ENCODE measurements at regions of chr9 and their contacts with region 1.

Region 1: DNA sequence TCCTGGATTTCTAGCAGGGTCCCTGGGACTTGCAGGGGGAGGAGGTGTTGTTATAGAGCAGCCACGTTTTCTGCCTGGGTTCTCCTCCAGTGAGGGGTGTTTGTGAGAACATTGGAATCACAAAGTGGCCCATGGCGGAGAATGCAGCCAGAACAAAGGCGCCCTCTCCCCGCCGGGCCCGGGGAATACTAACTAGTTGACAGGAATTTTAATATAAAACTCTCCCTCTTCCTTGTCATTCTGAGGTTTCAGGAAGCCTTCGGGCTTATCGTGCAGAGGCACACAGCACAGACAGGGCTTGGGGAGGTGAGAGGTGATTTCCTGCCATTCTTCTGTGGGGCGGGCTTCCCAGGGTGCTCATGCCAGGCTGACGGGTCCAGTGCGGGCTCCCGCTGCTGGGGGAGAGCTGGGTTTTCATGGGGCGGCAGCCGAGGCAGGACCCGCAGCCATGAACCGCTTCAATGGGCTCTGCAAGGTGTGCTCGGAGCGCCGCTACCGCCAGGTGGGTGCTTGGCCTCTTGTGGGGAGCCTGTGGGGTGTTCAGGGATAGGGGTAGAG is 37.7 kb downstream of the RGS3 start:
- DNase-seq: peak in 4 of 5 donors; percentile 59 to 72 (median 68)
- ATAC-seq: peak in 3 of 4 donors; percentile 66 to 77 (median 72)
- H3K4me3 ChIP-seq: peak overlapping the region; percentile 23 to 71 (median 62)
- H3K27ac ChIP-seq: peak overlapping the region; percentile 67 to 91 (median 87)
- H3K4me1 ChIP-seq: peaks cover 0 to 64% (median 30%) of the 10 kb centered on the region in 12 donors
- H3K27me3 ChIP-seq: no peaks in the 10 kb centered on the region
- CTCF ChIP-seq: peak in 2 of 12 donors; percentile 25 to 27
- POLR2A ChIP-seq: peak in 1 of 2 donors; percentile 40

Region 2: DNA sequence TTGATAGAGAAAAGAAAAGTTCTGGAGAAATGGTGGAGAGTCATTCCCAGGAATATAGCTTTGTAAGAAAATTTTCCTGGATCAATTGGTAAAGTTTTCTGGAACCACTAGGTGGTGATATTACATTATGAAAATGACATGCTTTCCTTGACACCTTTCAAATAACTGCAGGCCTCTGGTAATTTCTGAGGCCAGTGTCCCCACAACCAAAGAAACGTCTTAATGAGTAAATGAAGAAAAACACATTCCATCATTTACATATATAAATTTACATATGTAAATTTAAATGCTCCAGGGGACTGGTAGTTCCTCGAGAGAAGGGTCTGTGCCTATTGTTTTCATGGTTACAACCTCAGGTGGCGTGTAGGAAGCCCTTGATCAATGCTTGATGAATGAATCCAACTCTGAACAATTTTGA is 54.9 kb before region 1 on chr9:
- intact Hi-C with region 1: loop called in 4 of 10 experiments (anchors 2 to 10 kb)
- DNase-seq: no peak
- ATAC-seq: peak in 3 of 4 donors; percentile 42 to 70 (median 59)
- H3K4me3 ChIP-seq: no peak overlapping the region
- H3K27ac ChIP-seq: peak overlapping the region in 9 of 12 donors; percentile 6 to 67 (median 35)
- H3K4me1 ChIP-seq: peaks cover 0 to 19% (median 5%) of the 10 kb centered on the region in 12 donors
- H3K27me3 ChIP-seq: no peaks in the 10 kb centered on the region
- CTCF ChIP-seq: peak; percentile 53 to 82 (median 70)
- POLR2A ChIP-seq: no peak

Region 3: DNA sequence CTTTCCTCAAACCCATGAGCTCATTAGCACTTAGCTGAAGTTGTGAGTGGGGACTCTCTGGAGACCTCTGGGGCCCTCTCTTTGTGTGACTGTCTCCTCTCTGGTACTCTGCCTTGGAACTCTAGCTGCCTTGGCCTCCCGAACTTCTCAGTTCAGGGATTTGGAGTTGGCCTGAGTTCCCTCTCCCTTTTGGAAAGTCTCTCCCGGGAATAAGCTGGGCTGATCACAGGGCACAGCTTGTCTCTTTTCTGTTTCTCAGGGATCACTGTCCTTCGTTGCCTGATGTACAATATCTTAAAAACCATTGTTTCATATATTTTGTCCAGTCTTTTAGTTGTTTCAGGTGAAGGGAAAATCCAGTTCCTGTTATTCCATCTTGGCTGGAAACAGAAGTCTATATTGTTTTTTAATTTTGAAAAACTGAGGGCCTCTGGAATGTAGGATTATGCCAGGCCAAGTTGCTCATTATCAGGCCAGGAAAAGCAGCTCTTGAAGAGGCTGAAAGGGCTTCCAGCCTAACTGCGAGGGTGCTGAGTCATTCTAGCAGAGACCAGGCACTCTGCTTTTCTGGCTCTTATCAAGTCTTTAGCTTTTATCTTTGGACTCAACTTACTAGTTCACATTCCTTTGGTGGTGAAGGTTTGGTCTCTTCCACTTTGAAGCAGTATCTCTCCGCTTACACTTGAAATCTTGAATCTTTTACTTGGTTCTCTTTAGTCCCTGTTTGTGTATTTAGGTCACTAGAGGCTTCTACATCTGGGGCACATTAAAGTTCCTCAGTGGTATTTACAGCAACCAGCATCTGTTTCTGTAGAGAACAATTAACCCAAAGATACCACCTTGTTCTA is 46.1 kb before region 1 on chr9:
- intact Hi-C with region 1: loop called in 4 of 10 experiments (anchors 2 to 10 kb)
- DNase-seq: peak in 4 of 5 donors; percentile 58 to 80 (median 68)
- ATAC-seq: peak; percentile 85 to 96 (median 94)
- H3K4me3 ChIP-seq: no peak overlapping the region
- H3K27ac ChIP-seq: peak overlapping the region; percentile 84 to 97 (median 90)
- H3K4me1 ChIP-seq: peaks cover 4 to 39% (median 28%) of the 10 kb centered on the region in 12 donors
- H3K27me3 ChIP-seq: no peaks in the 10 kb centered on the region
- CTCF ChIP-seq: peak in 1 of 12 donors; percentile 8
- POLR2A ChIP-seq: no peak

Region 4: DNA sequence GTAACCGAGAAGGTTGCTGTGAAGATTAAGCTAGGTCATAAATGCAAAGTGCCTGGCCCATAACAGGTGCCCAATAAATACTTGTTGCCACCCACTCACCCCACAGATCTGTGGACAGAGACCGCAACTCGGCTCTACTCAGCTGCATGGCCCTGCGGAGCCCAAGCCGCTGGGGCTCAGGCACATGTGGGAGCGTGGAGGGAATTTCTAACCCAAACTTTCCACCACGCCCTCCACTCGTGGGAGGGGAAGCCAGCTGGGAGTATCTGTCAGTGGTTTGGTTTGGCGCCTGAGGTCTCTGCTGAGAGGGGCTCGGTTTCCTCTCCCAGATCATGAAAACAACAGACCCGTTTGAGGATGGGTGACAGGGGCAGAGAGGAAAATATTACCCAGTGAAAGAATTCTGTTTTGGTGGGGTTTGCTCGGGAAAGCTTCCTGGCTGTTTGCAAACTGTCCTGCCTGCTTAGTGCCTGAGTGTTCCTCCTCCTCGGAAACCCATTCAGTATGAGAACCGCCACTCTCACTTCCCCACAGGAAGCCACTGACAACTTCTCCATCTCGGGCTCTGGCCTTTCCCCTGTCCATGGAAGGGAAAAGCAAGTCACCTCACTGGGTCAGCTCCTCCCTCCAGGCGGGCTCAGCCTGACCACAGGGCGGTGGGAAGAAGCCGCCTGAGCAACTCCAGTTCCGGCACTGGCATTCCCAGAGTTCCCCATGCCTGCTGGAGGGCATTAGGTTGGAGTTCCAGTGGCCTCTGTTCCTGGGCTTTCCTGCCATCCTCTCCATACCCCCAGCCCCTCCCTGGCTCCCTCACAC is 22.4 kb after region 1 on chr9:
- intact Hi-C with region 1: no loop called
- DNase-seq: peak; percentile 69 to 81 (median 77)
- ATAC-seq: peak; percentile 17 to 69 (median 62)
- H3K4me3 ChIP-seq: peak overlapping the region in 3 of 12 donors; percentile 4 to 39 (median 17)
- H3K27ac ChIP-seq: peak overlapping the region; percentile 49 to 86 (median 80)
- H3K4me1 ChIP-seq: peaks cover 23 to 98% (median 81%) of the 10 kb centered on the region in 12 donors
- H3K27me3 ChIP-seq: no peaks in the 10 kb centered on the region
- CTCF ChIP-seq: no peak
- POLR2A ChIP-seq: no peak

Region 5: GRCh38 chr9:113564498-113565237 is 63.5 kb after region 1 on chr9:
- intact Hi-C with region 1: loop called in 1 of 10 experiments (anchors 5 kb)
- DNase-seq: peak; percentile 78 to 87 (median 85)
- ATAC-seq: peak; percentile 75 to 86 (median 78)
- H3K4me3 ChIP-seq: peak overlapping the region; percentile 28 to 67 (median 50)
- H3K27ac ChIP-seq: peak overlapping the region; percentile 80 to 99 (median 92)
- H3K4me1 ChIP-seq: peaks cover 24 to 81% (median 70%) of the 10 kb centered on the region in 12 donors
- H3K27me3 ChIP-seq: no peaks in the 10 kb centered on the region
- CTCF ChIP-seq: no peak
- POLR2A ChIP-seq: peak in 1 of 2 donors; percentile 27